ENCODE measurements at regions of chr3 and their contacts with region 1.

Region 1: DNA sequence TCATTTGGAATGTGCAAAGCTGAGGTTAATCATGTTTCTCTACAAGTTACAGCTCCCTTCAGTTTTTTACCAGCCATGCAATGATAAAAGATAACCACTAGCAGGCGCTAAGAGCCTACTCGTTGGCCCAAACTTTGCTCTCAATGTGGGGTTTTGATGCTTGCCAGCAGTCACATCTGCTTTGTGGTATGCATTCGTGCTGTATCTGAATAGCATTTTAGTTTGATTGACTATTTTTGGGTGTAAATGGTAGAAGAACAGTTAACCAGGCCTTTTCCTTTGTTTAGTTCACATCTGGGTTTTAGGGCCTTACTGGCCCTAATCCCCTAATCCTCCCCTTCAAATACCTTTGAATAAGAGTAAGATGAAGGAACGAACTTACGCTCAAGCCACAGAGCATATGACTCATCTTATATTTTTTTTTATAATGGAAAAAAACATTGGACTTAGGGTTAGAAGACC is 4.4 kb upstream of the CLDN11 start:
- DNase-seq: peak; percentile 82
- H3K4me3 ChIP-seq: no peak overlapping the region
- H3K27ac ChIP-seq: no peak overlapping the region
- H3K27me3 ChIP-seq: no peaks in the 10 kb centered on the region
- CTCF ChIP-seq: peak; percentile 100

Region 2: DNA sequence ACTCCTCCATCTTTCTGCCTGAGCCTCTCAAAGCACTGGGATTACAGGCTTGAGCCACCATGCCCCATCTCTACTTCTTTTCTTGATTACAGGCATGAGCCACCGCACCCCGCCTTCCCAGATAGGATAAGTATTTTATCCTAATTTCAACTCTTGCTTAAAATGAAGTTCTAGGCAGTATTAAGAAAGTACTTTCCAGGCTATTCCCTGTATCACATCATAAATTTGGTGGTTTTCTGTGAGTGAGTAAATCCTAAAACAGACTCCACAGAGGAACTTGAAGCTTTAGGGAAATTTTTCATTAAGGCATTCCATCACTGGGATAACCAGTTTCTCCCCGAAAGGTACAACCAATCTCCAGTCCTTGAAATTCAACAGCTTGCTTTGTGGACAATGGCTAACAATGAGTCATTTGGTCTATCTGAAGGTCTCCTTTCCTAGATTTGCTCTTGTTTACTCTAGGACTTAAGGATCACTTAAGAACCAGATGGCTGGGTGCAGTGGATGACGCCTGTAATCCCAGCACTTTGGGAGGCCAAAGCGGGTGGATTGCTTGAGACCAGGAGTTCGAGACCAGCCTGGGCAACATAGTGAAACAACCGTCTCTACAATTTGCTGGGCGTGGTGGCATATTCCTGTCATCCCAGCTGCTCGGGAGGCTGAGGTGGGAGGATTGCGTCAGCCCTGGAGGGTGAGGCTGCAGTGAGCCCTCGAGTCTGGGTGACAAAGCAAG is 106.4 kb before region 1 on chr3:
- CTCF ChIA-PET with region 1: interaction called, 22 read pairs
- POLR2A ChIA-PET with region 1: no interaction called
- DNase-seq: peak; percentile 23
- H3K4me3 ChIP-seq: no peak overlapping the region
- H3K27ac ChIP-seq: peak overlapping the region; percentile 21
- H3K27me3 ChIP-seq: no peaks in the 10 kb centered on the region
- CTCF ChIP-seq: no peak

Region 3: GRCh38 chr3:170506556-170506955 is 92.3 kb after region 1 on chr3:
- CTCF ChIA-PET with region 1: interaction called, 13 read pairs
- POLR2A ChIA-PET with region 1: no interaction called
- DNase-seq: peak; percentile 18
- H3K4me3 ChIP-seq: no peak overlapping the region
- H3K27ac ChIP-seq: no peak overlapping the region
- H3K27me3 ChIP-seq: no peaks in the 10 kb centered on the region
- CTCF ChIP-seq: no peak

Region 4: GRCh38 chr3:170542704-170543103 is 128.5 kb after region 1 on chr3:
- CTCF ChIA-PET with region 1: no interaction called
- POLR2A ChIA-PET with region 1: no interaction called
- DNase-seq: no peak
- H3K4me3 ChIP-seq: no peak overlapping the region
- H3K27ac ChIP-seq: no peak overlapping the region
- H3K27me3 ChIP-seq: no peaks in the 10 kb centered on the region
- CTCF ChIP-seq: no peak

Region 5: GRCh38 chr3:170726976-170727661 is 312.9 kb after region 1 on chr3:
- CTCF ChIA-PET with region 1: interaction called, 18 read pairs
- POLR2A ChIA-PET with region 1: interaction called, 5 read pairs
- DNase-seq: no peak
- H3K4me3 ChIP-seq: peak overlapping the region; percentile 36
- H3K27ac ChIP-seq: peak overlapping the region; percentile 99
- H3K27me3 ChIP-seq: no peaks in the 10 kb centered on the region
- CTCF ChIP-seq: no peak

Region 6: DNA sequence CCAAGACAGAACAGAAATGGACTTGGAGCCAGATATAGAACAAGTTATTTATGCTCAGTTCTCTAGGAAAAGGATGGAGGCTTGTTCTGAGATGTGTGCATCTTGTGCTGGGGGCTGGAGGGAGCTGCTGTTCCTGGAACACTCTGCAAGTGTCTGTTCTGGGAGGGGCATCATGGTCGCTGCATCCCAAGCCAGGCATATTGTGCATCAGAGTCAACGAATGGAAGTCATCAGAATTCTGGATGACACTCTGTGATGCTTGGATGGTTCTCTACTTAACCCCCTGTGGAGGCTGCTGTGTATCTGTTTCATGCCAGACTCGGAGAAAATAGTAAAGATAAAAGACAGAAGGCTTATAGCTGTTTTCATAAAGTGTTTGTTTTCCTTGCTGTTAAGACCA is 421.1 kb after region 1 on chr3:
- CTCF ChIA-PET with region 1: interaction called, 14 read pairs
- POLR2A ChIA-PET with region 1: no interaction called
- DNase-seq: no peak
- H3K4me3 ChIP-seq: no peak overlapping the region
- H3K27ac ChIP-seq: no peak overlapping the region
- H3K27me3 ChIP-seq: no peaks in the 10 kb centered on the region
- CTCF ChIP-seq: no peak

Region 7: GRCh38 chr3:170848292-170848917 is 434.2 kb after region 1 on chr3:
- CTCF ChIA-PET with region 1: interaction called, 58 read pairs
- POLR2A ChIA-PET with region 1: no interaction called
- DNase-seq: no peak
- H3K4me3 ChIP-seq: no peak overlapping the region
- H3K27ac ChIP-seq: no peak overlapping the region
- H3K27me3 ChIP-seq: no peaks in the 10 kb centered on the region
- CTCF ChIP-seq: peak; percentile 50